ENCODE measurements at regions of chr2 and their contacts with region 1.

Region 1: DNA sequence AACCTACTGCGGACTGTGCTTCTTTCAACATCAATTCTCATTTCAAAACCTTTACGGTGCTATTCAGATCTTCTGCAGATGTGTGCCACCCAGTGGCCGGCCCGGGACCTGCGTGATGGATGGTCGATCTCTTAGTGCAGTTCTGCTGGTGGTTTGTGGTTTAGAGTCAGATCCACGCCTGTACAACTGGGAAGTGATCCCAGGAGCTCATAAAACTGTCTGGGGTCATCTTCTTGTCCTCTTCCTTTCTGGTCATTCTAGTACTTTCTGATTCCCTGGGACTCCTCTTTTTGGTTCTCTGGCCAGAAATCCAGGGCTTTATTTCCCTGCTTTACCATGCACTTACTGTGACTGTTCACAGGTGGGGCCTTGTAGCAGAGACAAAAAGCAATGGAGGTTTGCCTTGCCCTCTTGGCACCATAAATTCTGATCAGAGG is 15.8 kb upstream of the SELENOI start:
- DNase-seq: peak; percentile 70 to 86 (median 80)
- ATAC-seq: peak; percentile 99
- H3K4me3 ChIP-seq: no peak overlapping the region
- H3K4me3 Mint-ChIP-seq: no peak overlapping the region
- H3K27ac ChIP-seq: no peak overlapping the region
- H3K27ac Mint-ChIP-seq: no peak overlapping the region
- H3K4me1 ChIP-seq: peaks cover 6% of the 10 kb centered on the region
- H3K4me1 Mint-ChIP-seq: peaks cover 11% of the 10 kb centered on the region
- H3K27me3 ChIP-seq: no peaks in the 10 kb centered on the region
- H3K27me3 Mint-ChIP-seq: no peaks in the 10 kb centered on the region
- CTCF ChIP-seq: peak; percentile 95

Region 2: GRCh38 chr2:25991965-25992364 is 338.2 kb before region 1 on chr2:
- CTCF ChIA-PET with region 1: no interaction called
- POLR2A ChIA-PET with region 1: no interaction called
- intact Hi-C with region 1: loop called (anchors 1 to 5 kb)
- DNase-seq: no peak
- ATAC-seq: peak; percentile 13
- H3K4me3 ChIP-seq: no peak overlapping the region
- H3K4me3 Mint-ChIP-seq: no peak overlapping the region
- H3K27ac ChIP-seq: no peak overlapping the region
- H3K27ac Mint-ChIP-seq: peak overlapping the region; percentile 1
- H3K4me1 ChIP-seq: peaks cover 9% of the 10 kb centered on the region
- H3K4me1 Mint-ChIP-seq: peaks cover 8% of the 10 kb centered on the region
- H3K27me3 ChIP-seq: no peaks in the 10 kb centered on the region
- H3K27me3 Mint-ChIP-seq: no peaks in the 10 kb centered on the region
- CTCF ChIP-seq: no peak

Region 3: GRCh38 chr2:26172871-26173775 is 157.0 kb before region 1 on chr2 and contains the start of gene GAREM2:
- CTCF ChIA-PET with region 1: no interaction called
- POLR2A ChIA-PET with region 1: no interaction called
- intact Hi-C with region 1: loop called in 1 of 2 experiments (anchors 5 kb)
- DNase-seq: peak in 1 of 14 experiments; percentile 26
- ATAC-seq: no peak
- H3K4me3 ChIP-seq: peak within 1 kb of the TSS; percentile 28
- H3K4me3 Mint-ChIP-seq: peak within 1 kb of the TSS; percentile 91
- H3K27ac ChIP-seq: no peak within 1 kb of the TSS
- H3K27ac Mint-ChIP-seq: no peak within 1 kb of the TSS
- H3K4me1 ChIP-seq: peaks cover 22% of the 10 kb centered on the region
- H3K4me1 Mint-ChIP-seq: peaks cover 15% of the 10 kb centered on the region
- H3K27me3 ChIP-seq: peaks cover 37 to 45% of the 10 kb centered on the region in 2 experiments
- H3K27me3 Mint-ChIP-seq: peaks cover 42% of the 10 kb centered on the region
- CTCF ChIP-seq: no peak
- total RNA-seq, gene GAREM2: 4.3 to 7.3 TPM

Region 4: DNA sequence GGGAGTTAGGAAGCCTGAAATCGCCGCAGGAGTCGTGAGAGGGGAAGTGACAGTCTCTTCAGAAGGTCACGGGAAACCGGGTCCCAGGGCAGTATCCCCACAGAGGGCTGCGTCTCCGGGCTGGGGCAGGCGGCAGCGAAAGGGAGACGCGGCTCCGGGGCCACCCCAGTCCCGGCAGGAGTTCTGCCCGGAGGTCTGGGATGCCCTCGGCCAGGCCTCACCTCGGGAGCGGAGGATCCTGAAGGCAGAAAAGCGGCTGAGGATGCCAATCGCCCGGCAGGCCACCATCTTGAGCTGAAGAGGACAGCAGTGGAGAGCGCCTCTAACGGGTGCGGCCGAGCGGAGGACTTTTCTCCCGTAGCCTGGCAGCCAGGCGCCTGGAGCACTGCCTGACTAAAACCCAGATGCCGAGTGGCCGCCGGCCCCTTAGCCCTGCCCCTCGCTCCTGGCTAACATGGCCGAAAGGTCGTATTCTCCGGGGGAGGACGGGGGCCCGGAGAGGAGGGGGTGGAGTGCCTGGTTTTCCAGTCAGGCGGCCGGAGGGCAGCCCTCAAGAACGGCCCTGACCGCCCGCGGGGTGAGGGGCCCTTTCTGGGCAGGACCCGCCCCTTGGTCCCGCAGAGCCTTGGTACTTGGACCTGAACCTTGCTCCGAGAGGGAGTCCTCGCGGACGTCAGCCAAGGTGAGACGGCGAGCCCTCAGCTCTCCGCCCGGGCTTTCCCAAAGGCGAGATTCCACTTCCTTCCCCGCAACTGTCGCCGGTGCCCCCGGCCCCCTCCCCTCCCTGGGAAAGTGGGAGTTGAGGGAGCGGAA is 85.6 kb before region 1 on chr2 and contains the starts of genes HADHA and HADHB:
- CTCF ChIA-PET with region 1: no interaction called
- POLR2A ChIA-PET with region 1: no interaction called
- intact Hi-C with region 1: loop called (anchors 2 to 5 kb)
- DNase-seq: peak; percentile 68 to 93 (median 80)
- ATAC-seq: peak; percentile 81
- H3K4me3 ChIP-seq: peak within 1 kb of the TSS; percentile 96
- H3K4me3 Mint-ChIP-seq: peak within 1 kb of the TSS; percentile 100
- H3K27ac ChIP-seq: peak within 1 kb of the TSS; percentile 95 to 98
- H3K27ac Mint-ChIP-seq: peak within 1 kb of the TSS; percentile 97
- H3K4me1 ChIP-seq: peaks cover 33% of the 10 kb centered on the region
- H3K4me1 Mint-ChIP-seq: peaks cover 76% of the 10 kb centered on the region
- H3K27me3 ChIP-seq: no peaks in the 10 kb centered on the region
- H3K27me3 Mint-ChIP-seq: no peaks in the 10 kb centered on the region
- CTCF ChIP-seq: no peak
- total RNA-seq, gene HADHA: 72.4 to 73.7 TPM
- total RNA-seq, gene HADHB: 25.2 to 30.3 TPM

Region 5: DNA sequence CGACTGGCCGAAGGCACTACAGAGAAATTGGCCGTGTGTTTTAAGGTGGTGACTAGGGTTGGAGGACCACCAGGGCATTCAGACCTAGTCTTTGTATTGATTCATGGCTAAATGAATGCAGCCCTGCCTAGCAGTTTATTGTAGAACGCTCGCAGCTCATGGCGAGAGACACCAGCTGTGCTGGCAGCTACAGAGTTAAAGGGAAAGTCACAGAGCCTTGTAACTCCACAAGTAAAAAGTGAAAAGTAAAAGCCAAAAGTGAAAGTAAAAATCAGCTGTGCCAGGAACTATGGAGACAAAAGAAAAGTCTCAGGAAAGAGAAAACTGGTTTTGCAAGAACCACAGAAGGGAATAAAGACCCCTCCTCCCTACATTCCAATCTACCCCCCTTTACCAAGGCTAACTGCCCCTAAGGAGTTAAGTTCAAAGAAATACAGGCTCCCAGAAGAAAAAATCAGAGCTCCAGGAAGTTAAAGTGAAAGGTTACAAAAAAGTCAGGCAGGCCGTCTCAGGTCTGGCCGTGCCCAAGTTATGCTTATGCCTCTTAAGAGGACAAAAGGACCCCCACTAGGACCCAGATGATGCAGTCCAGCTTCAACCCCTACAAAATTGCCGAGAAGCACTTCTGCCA is 30.5 kb before region 1 on chr2:
- CTCF ChIA-PET with region 1: no interaction called
- POLR2A ChIA-PET with region 1: interaction called, 3 read pairs
- intact Hi-C with region 1: loop called (anchors 1 to 5 kb)
- DNase-seq: peak in 8 of 14 experiments; percentile 9 to 62 (median 40)
- ATAC-seq: peak; percentile 46
- H3K4me3 ChIP-seq: peak overlapping the region; percentile 79
- H3K4me3 Mint-ChIP-seq: no peak overlapping the region
- H3K27ac ChIP-seq: peak overlapping the region; percentile 62 to 65
- H3K27ac Mint-ChIP-seq: no peak overlapping the region
- H3K4me1 ChIP-seq: peaks cover 24% of the 10 kb centered on the region
- H3K4me1 Mint-ChIP-seq: no peaks in the 10 kb centered on the region
- H3K27me3 ChIP-seq: no peaks in the 10 kb centered on the region
- H3K27me3 Mint-ChIP-seq: no peaks in the 10 kb centered on the region
- CTCF ChIP-seq: no peak

Region 6: GRCh38 chr2:26412091-26412673 is 82.1 kb after region 1 on chr2:
- CTCF ChIA-PET with region 1: no interaction called
- POLR2A ChIA-PET with region 1: no interaction called
- intact Hi-C with region 1: no loop called
- DNase-seq: peak in 3 of 14 experiments; percentile 5 to 17 (median 12)
- ATAC-seq: no peak
- H3K4me3 ChIP-seq: peak overlapping the region; percentile 24
- H3K4me3 Mint-ChIP-seq: peak overlapping the region; percentile 2
- H3K27ac ChIP-seq: no peak overlapping the region
- H3K27ac Mint-ChIP-seq: no peak overlapping the region
- H3K4me1 ChIP-seq: no peaks in the 10 kb centered on the region
- H3K4me1 Mint-ChIP-seq: peaks cover 10% of the 10 kb centered on the region
- H3K27me3 ChIP-seq: peaks cover 0 to 7% of the 10 kb centered on the region in 2 experiments
- H3K27me3 Mint-ChIP-seq: peaks cover 11% of the 10 kb centered on the region
- CTCF ChIP-seq: no peak

Measured in CD4-positive, alpha-beta T cell (primary cell).